GM10248 (cell line): ENCODE measurements at regions of chr17 and their contacts with region 1.

Region 1: DNA sequence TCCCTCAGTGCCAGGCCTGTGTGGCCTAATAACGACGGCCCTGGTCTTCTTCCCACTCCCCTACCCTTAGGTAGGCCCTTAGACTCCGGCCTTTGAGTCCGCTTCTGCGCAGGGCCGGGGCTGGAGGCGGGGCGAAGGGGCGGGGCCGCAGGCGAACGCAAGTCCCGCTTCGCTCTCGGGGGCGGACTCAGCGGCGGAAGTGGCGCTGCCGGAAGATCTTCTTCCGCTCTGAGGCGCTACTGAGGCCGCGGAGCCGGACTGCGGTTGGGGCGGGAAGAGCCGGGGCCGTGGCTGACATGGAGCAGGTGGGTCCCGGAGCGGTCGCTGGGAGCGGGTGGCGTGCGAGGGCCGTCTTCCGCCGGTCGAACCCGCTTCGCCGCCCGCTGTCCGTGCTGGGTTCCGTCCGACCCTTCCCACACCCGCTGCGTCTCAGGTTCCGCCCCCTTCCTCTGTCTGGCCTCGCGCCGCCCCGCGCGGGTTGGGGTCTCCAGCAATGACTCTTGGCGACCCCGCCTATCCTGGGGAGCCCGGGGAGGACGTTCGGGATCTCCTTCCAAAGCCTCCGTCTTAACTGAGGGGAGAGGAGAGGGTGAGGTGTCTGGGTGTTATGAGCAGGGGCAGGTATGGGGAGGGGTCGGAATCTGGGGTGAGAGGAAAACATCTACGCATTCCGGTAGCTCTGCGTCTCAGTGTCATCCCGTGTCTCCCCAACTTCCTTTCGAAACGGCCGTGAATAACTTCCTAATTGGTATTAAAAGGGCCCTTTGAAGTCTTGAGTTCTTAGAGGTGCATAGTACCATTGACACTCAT is at the start of gene STARD3:
- DNase-seq: peak; percentile 97
- CTCF ChIP-seq: no peak

Region 2: GRCh38 chr17:39648616-39649366 is 11.7 kb after region 1 on chr17:
- CTCF ChIA-PET with region 1: interaction called, 60 read pairs
- POLR2A ChIA-PET with region 1: no interaction called
- DNase-seq: no peak
- CTCF ChIP-seq: no peak

Region 3: GRCh38 chr17:39668199-39668966 is 31.3 kb after region 1 on chr17 and contains the start of gene PNMT:
- CTCF ChIA-PET with region 1: interaction called, 11 read pairs
- POLR2A ChIA-PET with region 1: no interaction called
- DNase-seq: peak; percentile 80
- CTCF ChIP-seq: peak; percentile 89